Natural killer cell (primary cell): ENCODE measurements at regions of chr4 and their contacts with region 1.

Region 1: DNA sequence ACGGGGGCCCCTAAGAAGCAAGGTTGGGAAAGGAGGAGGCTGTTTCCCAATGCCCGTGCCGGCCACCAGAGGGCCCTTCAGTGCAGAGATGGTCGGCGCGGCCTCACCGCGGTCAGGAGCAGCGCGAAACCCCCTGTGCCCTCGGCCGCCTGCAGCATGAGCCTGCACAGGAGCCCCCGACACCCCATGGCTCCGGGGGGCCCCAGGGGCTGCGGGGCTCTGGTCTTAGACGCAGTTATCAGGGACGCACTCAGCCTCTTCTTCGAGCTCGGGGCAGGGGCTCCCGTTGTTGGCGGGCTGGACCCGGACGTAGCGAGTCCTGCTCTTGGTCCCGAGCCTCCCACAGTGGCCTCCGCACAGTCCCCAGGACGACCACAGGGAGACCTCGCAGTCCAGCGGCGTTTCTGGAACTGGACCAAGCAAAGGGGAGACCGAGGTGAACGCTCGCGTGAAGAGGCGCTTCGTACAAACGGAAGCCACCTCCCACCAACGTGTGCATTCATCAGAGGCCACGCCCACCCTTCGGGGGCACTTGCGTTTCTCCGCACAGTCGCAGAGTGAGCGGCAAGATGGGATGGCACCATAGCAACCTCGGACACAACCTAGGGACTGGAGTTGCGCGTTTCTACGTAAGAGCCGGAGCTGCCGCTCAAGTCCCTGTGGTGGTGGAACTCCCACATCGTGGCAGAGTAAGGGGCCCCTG is 5.0 kb downstream of the SPON2 start:
- DNase-seq: peak; percentile 89 to 97
- ATAC-seq: peak; percentile 79 to 92 (median 82)
- H3K4me3 ChIP-seq: peak overlapping the region; percentile 81
- H3K4me3 Mint-ChIP-seq: peak overlapping the region; percentile 94
- H3K27ac ChIP-seq: peak overlapping the region; percentile 89
- H3K27ac Mint-ChIP-seq: peak overlapping the region; percentile 88 to 96
- H3K4me1 ChIP-seq: peaks cover 64% of the 10 kb centered on the region
- H3K4me1 Mint-ChIP-seq: peaks cover 49% of the 10 kb centered on the region in 2 donors
- H3K27me3 ChIP-seq: no peaks in the 10 kb centered on the region
- H3K27me3 Mint-ChIP-seq: no peaks in the 10 kb centered on the region
- CTCF ChIP-seq: peak; percentile 99

Region 2: DNA sequence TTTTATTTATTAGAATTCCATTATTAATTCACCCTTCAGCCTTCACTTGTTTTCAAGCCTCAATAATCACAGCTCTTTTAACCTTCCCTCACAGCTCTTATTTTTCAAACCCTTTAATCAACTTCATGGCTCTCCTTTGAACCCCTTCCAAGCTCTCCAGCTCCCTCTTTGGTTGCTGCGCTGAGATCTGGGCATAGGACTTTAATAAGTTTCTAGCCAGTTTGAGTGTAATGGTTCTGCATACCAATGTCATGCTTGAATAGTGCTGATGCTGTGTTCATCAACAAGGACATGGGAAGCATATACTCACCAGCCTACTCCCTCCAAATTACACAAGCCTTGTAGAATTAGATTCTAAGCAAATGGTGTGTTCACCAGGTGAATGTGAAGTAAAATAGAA is 50.6 kb before region 1 on chr4:
- intact Hi-C with region 1: no loop called
- DNase-seq: no peak
- ATAC-seq: no peak
- H3K4me3 ChIP-seq: no peak overlapping the region
- H3K4me3 Mint-ChIP-seq: no peak overlapping the region
- H3K27ac ChIP-seq: no peak overlapping the region
- H3K27ac Mint-ChIP-seq: no peak overlapping the region
- H3K4me1 ChIP-seq: peaks cover 4% of the 10 kb centered on the region
- H3K4me1 Mint-ChIP-seq: peaks cover 0 to 5% of the 10 kb centered on the region in 2 donors
- H3K27me3 ChIP-seq: peaks cover 5% of the 10 kb centered on the region
- H3K27me3 Mint-ChIP-seq: peaks cover 15 to 28% of the 10 kb centered on the region in 2 donors
- CTCF ChIP-seq: no peak

Region 3: DNA sequence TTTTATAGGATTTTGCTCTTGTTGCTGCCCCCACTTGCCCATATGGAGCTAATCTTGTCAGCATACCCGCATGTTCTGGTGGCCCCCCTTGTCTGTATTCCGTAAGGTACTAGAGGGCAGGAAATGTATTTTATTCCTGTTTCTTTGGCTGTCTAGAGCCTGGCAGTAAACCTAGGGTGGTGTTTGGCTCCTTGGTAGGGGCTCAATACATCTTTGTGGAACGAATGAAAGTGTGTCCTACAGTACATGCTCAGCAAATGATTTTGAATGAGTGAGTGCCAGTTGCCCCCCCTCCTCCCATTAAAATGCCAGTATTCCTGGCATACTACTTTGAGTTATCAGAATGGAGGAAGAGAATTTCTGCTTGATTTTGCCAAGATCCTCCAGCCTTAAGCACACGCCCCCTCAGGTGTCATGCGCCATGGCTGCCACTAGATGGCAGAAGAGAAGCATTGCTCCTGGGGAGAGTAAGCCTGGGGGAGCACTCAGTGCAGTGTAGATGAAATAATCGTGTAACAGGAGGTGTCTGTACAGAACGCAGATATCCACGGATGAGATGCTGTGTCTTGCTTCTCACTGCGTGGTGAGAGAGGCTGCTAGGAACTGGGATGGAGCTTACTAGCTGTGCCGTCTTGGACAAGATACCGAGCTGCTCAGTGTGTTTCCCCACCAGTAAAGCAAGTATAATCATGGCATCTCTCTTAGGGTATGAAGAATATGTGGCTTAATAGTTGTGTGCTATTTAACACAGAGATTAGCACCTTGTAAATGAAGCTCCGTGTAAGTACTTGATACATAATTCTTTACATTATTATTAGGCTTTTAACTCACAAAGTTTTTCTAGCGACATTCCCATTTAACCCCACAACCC is 36.8 kb before region 1 on chr4:
- intact Hi-C with region 1: loop called (anchors 5 kb)
- DNase-seq: peak; percentile 74 to 91
- ATAC-seq: peak; percentile 96 to 100 (median 99)
- H3K4me3 ChIP-seq: no peak overlapping the region
- H3K4me3 Mint-ChIP-seq: no peak overlapping the region
- H3K27ac ChIP-seq: no peak overlapping the region
- H3K27ac Mint-ChIP-seq: peak overlapping the region in 1 of 2 donors; percentile 33
- H3K4me1 ChIP-seq: peaks cover 10% of the 10 kb centered on the region
- H3K4me1 Mint-ChIP-seq: peaks cover 0 to 15% of the 10 kb centered on the region in 2 donors
- H3K27me3 ChIP-seq: no peaks in the 10 kb centered on the region
- H3K27me3 Mint-ChIP-seq: peaks cover 0 to 13% of the 10 kb centered on the region in 2 donors
- CTCF ChIP-seq: peak; percentile 98

Region 4: GRCh38 chr4:1183985-1184773 is 16.8 kb after region 1 on chr4:
- intact Hi-C with region 1: loop called (anchors 2 kb)
- DNase-seq: peak; percentile 17 to 57
- ATAC-seq: peak; percentile 42 to 62 (median 57)
- H3K4me3 ChIP-seq: no peak overlapping the region
- H3K4me3 Mint-ChIP-seq: peak overlapping the region; percentile 86
- H3K27ac ChIP-seq: peak overlapping the region; percentile 68
- H3K27ac Mint-ChIP-seq: peak overlapping the region; percentile 77 to 80
- H3K4me1 ChIP-seq: peaks cover 44% of the 10 kb centered on the region
- H3K4me1 Mint-ChIP-seq: peaks cover 66 to 69% of the 10 kb centered on the region in 2 donors
- H3K27me3 ChIP-seq: no peaks in the 10 kb centered on the region
- H3K27me3 Mint-ChIP-seq: no peaks in the 10 kb centered on the region
- CTCF ChIP-seq: no peak

Region 5: DNA sequence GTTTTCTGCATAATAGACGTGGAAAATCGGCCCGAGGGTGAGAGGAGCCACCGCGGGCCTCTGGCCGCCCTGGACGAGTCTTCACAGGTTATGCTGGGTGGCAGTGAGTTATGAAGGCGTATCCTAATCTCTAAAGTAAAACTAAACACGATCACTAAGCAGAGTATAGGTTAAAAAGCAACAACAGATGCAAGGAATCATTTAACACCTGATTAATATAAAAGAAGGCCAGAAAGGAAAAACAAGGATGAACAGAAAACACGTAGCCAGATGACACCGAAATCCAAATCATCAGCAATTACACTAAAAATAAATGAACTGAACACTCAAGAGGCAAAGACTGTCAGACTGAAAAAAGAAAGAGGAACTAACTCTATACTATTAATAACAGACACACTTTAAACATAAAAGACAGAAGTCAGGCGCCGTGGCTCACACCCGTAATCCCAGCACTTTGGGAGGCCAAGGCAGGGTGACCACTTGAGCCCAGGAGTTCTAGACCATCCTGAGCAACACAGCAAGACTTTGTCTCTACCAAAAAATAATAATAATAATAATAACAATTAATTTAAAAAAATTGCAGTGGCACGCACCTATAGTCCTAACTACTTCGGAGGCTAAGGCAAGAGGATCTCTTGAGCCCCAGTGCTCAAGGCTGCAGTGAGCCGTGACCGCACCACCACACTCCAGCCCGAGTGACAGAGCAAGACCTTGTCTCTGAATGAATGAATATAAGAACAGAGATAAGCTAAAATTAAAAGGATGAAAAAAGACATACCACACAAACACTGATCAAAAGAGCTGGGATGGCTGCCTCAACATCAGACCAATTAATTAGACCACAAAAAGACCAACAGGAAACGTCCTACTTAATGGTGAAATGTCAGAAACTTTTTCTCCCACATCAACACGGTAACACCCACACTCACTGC is 51.5 kb after region 1 on chr4:
- intact Hi-C with region 1: loop called (anchors 5 kb)
- DNase-seq: no peak
- ATAC-seq: peak; percentile 43 to 53 (median 46)
- H3K4me3 ChIP-seq: no peak overlapping the region
- H3K4me3 Mint-ChIP-seq: peak overlapping the region; percentile 89
- H3K27ac ChIP-seq: peak overlapping the region; percentile 46
- H3K27ac Mint-ChIP-seq: peak overlapping the region; percentile 81 to 95
- H3K4me1 ChIP-seq: peaks cover 79% of the 10 kb centered on the region
- H3K4me1 Mint-ChIP-seq: peaks cover 45 to 59% of the 10 kb centered on the region in 2 donors
- H3K27me3 ChIP-seq: no peaks in the 10 kb centered on the region
- H3K27me3 Mint-ChIP-seq: no peaks in the 10 kb centered on the region
- CTCF ChIP-seq: no peak

Region 6: GRCh38 chr4:1266881-1267763 is 99.7 kb after region 1 on chr4:
- intact Hi-C with region 1: loop called (anchors 1 kb)
- DNase-seq: peak in 1 of 2 donors; percentile 42
- ATAC-seq: peak in 2 of 3 donors; percentile 22 to 60
- H3K4me3 ChIP-seq: no peak overlapping the region
- H3K4me3 Mint-ChIP-seq: peak overlapping the region; percentile 64
- H3K27ac ChIP-seq: peak overlapping the region; percentile 83
- H3K27ac Mint-ChIP-seq: peak overlapping the region; percentile 92 to 95
- H3K4me1 ChIP-seq: peaks cover 7% of the 10 kb centered on the region
- H3K4me1 Mint-ChIP-seq: peaks cover 9 to 10% of the 10 kb centered on the region in 2 donors
- H3K27me3 ChIP-seq: no peaks in the 10 kb centered on the region
- H3K27me3 Mint-ChIP-seq: no peaks in the 10 kb centered on the region
- CTCF ChIP-seq: no peak

Region 7: DNA sequence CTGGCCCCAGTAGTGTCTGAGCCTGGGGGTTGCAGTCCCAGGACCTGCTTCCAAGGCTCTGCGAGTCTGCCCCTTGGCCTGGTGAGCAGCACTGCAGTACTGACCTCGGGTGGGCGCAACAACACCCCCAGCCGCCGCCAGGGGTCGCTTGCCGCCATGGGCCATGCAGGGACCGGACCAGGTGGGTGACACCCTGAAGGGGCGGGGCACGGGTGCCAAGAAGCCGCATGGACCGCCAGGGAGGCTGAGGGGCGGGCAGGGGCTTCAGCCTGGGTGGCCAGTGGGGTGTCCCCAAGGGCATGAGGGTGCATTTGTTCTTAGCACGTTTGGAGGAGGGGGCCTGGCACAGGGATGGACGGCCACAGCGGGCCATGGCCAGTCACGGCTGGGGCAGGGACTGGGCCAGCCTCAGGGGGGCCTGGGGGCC is 578.9 kb after region 1 on chr4:
- intact Hi-C with region 1: no loop called
- DNase-seq: peak; percentile 66 to 81
- ATAC-seq: peak; percentile 54 to 83 (median 83)
- H3K4me3 ChIP-seq: no peak overlapping the region
- H3K4me3 Mint-ChIP-seq: no peak overlapping the region
- H3K27ac ChIP-seq: no peak overlapping the region
- H3K27ac Mint-ChIP-seq: no peak overlapping the region
- H3K4me1 ChIP-seq: peaks cover 10% of the 10 kb centered on the region
- H3K4me1 Mint-ChIP-seq: no peaks in the 10 kb centered on the region
- H3K27me3 ChIP-seq: no peaks in the 10 kb centered on the region
- H3K27me3 Mint-ChIP-seq: no peaks in the 10 kb centered on the region
- CTCF ChIP-seq: peak; percentile 66